ENCODE measurements at regions of chr22 and their contacts with region 1.

Region 1: DNA sequence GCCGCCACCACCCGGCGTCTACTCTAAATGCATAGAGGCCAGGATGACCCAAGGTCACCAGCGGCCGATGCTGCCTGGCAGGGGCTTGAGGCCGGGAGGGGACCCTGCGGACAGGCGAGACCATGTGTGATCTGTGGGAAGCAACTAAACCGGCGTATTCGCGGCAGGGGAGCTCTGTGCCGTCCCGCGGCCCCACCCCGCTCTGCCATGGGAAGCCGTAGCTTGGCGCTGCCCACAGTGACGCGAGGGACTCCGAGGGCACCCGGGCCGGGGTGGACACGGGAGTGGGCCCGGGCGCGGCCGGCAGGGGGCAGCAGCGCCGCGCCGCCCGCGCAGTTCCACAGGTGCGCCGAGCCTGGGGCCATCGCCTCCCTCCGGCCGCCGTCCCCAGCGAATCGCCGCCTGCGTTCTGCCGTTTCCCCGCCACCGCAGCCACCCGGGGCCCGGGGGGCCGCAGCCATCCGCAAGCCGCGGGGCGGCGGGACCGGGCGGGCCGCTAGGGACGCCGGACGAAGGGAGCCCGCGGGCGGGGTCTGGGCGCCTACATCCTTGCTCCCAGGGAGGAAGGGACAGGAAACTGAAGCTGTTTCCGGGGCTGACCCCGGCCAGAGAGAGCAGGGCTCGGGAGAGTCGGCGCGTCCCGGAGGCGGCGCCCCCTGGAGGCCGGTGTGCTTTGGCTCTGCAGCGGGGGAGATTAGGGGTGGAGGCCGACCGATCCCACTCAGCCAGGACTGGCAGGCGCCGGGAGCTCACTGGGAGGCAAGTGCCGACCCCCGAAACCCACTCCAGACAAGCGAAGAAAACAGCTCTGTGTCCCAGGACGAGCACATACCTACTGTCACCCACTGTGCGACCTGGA is 12.5 kb upstream of the HDHD5 start:
- DNase-seq: peak; percentile 89

Region 2: DNA sequence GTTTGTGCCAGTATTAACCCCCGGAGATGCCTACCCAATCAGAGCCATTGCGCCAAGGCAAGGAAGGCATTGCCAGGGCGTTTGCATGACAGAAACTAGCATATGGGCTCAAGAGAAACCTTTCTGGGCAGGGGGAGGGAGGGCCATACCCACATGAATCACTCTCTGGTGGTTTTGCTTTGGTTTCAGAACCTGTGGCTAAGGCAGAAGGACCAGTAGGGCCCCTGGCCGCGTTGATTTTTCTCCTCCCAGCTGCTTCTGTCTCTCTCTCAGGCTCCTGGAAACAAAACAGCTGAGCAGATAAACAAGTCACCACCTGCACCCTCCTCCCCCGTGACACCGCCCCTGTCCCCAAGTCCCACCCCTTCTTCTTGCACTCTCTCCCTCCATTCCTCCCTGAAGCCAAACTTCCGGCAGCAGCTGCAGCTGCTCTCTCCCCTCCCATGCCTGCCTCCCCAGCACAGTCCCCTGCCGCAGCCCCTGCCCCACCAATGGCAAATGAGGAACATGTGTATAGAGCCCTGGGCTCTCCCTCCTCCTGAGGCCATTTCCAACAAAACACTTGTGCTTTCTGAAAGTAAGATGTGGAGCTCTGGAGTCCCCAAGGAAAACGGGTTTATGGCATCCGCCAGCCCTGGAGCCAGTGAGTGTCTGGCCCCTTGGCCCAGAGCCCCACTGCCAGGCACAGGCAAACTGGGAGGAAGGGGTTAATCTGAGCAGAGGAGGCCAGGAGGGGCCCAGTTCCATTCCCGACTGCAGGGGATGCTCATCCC is 86.7 kb after region 1 on chr22:
- in situ Hi-C with region 1: loop called (anchors 25 kb)
- DNase-seq: peak; percentile 83

Region 3: GRCh38 chr22:17303840-17304779 is 132.6 kb after region 1 on chr22:
- in situ Hi-C with region 1: no loop called
- DNase-seq: no peak

Region 4: GRCh38 chr22:17436382-17436980 is 264.9 kb after region 1 on chr22:
- in situ Hi-C with region 1: no loop called
- DNase-seq: peak; percentile 21

Region 5: GRCh38 chr22:17501679-17502285 is 330.2 kb after region 1 on chr22:
- in situ Hi-C with region 1: loop called (anchors 10 kb)
- DNase-seq: peak; percentile 84

Measured in KBM-7 (cell line).